SK-N-SH (cell line): ENCODE measurements at regions of chr11 and their contacts with region 1.

Region 1: GRCh38 chr11:73478738-73479347 is 102.6 kb downstream of the RELT start:
- DNase-seq: peak; percentile 45
- H3K4me3 ChIP-seq: peak overlapping the region in 1 of 2 experiments; percentile 12; a peak in 1 of 4 replicates
- H3K27ac ChIP-seq: no peak overlapping the region
- H3K4me1 ChIP-seq: peaks cover 0 to 2% of the 10 kb centered on the region in 2 experiments; a peak in 2 of 4 replicates
- H3K27me3 ChIP-seq: no peaks in the 10 kb centered on the region
- CTCF ChIP-seq: peak; percentile 84
- EP300 ChIP-seq: no peak
- RAD21 ChIP-seq: peak; percentile 77

Region 2: DNA sequence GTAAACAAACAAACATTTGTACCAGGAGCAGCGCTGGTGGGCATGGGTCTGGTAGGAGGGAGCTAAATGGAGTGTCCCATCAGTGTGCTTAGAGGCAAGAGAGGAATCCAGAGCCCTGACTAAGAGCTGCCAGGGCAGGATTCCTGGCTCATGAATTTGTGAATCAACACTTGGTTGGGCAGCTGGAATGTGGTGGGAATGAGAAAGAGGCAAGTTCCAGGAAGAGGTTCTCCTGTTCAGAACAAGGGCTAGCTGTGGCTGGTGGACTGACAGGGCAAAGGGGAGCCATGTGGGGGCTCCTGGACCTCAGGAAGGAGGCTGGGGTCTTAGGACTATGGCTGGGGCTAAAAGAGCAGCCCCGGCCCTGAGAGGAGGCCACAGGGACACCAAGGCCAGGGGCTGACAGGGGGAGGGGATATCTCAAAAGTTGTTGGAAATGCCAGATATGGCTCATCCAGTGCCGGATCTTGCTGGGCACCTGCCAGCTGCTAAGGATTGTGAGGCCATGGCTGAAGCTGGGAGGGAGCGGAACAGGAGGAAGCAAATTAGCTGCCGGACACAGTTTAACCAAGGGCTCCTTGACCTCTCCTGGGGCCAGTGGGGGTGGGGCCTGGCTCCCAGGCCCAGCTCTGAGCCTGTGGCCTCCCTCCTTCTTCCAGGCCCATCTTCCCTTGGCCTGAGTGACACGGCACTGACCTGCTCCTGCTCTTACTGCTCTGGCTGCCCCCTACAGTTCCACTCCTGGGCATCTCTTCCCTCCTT is 221.3 kb before region 1 on chr11:
- CTCF ChIA-PET with region 1: no interaction called
- POLR2A ChIA-PET with region 1: no interaction called
- DNase-seq: no peak
- H3K4me3 ChIP-seq: no peak overlapping the region
- H3K27ac ChIP-seq: peak overlapping the region; percentile 56 to 98
- H3K4me1 ChIP-seq: peaks cover 12 to 18% of the 10 kb centered on the region in 2 experiments; a peak in 3 of 4 replicates
- H3K27me3 ChIP-seq: no peaks in the 10 kb centered on the region
- CTCF ChIP-seq: no peak
- EP300 ChIP-seq: peak in 1 of 2 experiments; percentile 53; a peak in 1 of 4 replicates
- RAD21 ChIP-seq: no peak

Region 3: DNA sequence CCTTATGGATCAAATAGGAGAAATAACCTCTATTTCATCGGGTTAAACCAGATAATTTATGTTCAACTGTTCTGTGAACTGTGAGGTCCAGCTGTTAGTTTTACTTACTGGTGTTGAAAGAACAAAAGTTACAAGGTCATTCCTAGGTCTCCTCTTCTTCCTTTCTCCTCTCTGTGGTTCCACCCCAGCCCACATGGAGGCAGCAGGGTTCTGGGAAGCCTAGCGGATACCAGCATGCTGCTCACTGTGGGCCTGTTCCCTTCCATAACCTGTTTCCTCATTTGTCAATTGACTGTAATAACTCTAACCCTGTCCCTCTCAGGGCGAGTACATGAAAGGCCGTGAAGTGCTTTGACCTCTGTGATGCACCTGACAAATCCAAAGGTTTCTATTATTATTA is 74.8 kb before region 1 on chr11:
- CTCF ChIA-PET with region 1: interaction called, 11 read pairs
- POLR2A ChIA-PET with region 1: no interaction called
- DNase-seq: peak; percentile 84
- H3K4me3 ChIP-seq: no peak overlapping the region
- H3K27ac ChIP-seq: no peak overlapping the region
- H3K4me1 ChIP-seq: no peaks in the 10 kb centered on the region
- H3K27me3 ChIP-seq: no peaks in the 10 kb centered on the region
- CTCF ChIP-seq: peak; percentile 81
- EP300 ChIP-seq: no peak
- RAD21 ChIP-seq: peak; percentile 94

Region 4: DNA sequence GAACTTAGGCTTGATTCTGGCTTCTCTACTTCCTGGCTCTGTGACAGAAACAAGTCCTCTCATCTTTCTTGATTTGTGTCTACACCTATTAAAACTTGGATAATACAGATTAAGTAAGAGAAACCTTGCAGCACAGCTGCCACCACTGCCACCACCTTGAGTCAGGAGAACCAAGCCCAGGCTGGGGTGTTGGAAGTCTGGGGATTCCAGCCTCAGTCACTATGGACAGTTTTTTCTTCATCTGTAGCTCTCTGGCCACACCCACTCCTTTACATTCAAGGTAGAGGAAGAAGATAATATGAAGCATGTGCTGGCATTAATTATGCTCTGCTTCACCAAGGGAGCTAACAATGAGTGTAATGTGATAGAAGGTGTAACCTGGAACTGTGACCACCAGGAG is 26.9 kb before region 1 on chr11:
- CTCF ChIA-PET with region 1: interaction called, 16 read pairs
- POLR2A ChIA-PET with region 1: no interaction called
- DNase-seq: no peak
- H3K4me3 ChIP-seq: no peak overlapping the region
- H3K27ac ChIP-seq: no peak overlapping the region
- H3K4me1 ChIP-seq: no peaks in the 10 kb centered on the region
- H3K27me3 ChIP-seq: no peaks in the 10 kb centered on the region
- CTCF ChIP-seq: no peak
- EP300 ChIP-seq: no peak
- RAD21 ChIP-seq: no peak

Region 5: DNA sequence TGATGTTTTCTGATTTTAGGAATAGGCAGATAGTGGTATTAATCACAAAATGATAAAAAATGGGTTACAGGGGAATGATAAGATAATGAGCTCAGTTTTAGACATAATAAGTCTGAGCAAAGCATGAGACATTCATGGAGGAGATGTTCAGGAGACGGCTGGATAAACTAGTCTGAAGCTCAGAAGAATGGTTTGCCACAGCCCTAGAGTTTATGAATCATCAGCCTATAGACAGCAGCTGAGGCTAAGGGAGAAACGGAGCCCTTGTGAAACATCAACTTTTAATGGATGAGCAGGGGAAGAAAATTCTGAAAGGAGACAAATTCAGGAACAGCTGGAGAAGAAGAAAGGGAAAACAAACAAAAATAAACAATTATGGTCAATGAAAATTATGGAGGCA is 15.5 kb before region 1 on chr11:
- CTCF ChIA-PET with region 1: interaction called, 85 read pairs
- POLR2A ChIA-PET with region 1: no interaction called
- DNase-seq: no peak
- H3K4me3 ChIP-seq: no peak overlapping the region
- H3K27ac ChIP-seq: peak overlapping the region in 1 of 2 experiments; percentile 49; a peak in 2 of 4 replicates
- H3K4me1 ChIP-seq: peaks cover 9 to 27% of the 10 kb centered on the region in 2 experiments
- H3K27me3 ChIP-seq: no peaks in the 10 kb centered on the region
- CTCF ChIP-seq: no peak
- EP300 ChIP-seq: no peak
- RAD21 ChIP-seq: no peak

Region 6: GRCh38 chr11:73510877-73511276 is 32.0 kb after region 1 on chr11:
- CTCF ChIA-PET with region 1: interaction called, 36 read pairs
- POLR2A ChIA-PET with region 1: no interaction called
- DNase-seq: no peak
- H3K4me3 ChIP-seq: no peak overlapping the region
- H3K27ac ChIP-seq: no peak overlapping the region
- H3K4me1 ChIP-seq: peaks cover 0 to 6% of the 10 kb centered on the region in 2 experiments; a peak in 3 of 4 replicates
- H3K27me3 ChIP-seq: no peaks in the 10 kb centered on the region
- CTCF ChIP-seq: no peak
- EP300 ChIP-seq: no peak
- RAD21 ChIP-seq: no peak

Region 7: DNA sequence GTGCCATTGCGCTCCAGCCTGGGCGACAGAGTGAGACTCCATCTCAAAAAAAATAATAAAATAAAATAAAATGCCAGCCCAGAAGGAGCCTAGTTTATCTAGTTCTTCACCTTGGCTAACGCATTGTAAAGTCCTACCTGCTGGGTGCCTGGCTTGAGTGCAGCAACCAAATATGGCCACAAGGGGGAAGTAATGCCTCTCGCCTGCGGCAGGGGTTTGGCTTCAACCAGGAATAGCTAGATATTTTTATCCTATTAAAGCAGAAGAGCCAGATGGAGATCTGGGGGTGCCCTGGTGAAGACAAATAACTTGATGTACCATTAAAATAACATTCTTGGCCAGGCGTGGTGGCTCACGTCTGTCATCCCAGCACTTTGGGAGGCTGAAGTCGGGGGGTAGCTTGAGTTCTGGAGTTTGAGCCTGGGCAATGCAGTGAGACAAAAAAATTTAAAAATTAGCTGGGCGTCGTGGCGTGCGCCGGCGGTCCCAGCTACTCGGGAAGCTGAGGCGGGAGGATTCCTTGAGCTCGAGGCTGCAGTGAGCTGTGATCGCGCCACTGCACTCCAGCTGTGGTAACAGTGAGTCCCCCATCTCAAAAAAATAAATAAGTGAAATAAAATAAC is 147.0 kb after region 1 on chr11:
- CTCF ChIA-PET with region 1: interaction called, 20 read pairs
- POLR2A ChIA-PET with region 1: no interaction called
- DNase-seq: peak; percentile 81
- H3K4me3 ChIP-seq: peak overlapping the region in 1 of 2 experiments; percentile 45; a peak in 1 of 4 replicates
- H3K27ac ChIP-seq: no peak overlapping the region
- H3K4me1 ChIP-seq: no peaks in the 10 kb centered on the region
- H3K27me3 ChIP-seq: no peaks in the 10 kb centered on the region; the same call in 1 of the 2 replicates
- CTCF ChIP-seq: peak; percentile 92
- EP300 ChIP-seq: no peak
- RAD21 ChIP-seq: peak; percentile 81